Heart right ventricle (tissue), 16 donors: ENCODE measurements at regions of chr11 and their contacts with region 1.

Region 1: GRCh38 chr11:100930185-100930778 is 199.3 kb downstream of the PGR start:
- DNase-seq: peak in 1 of 2 donors; percentile 11
- ATAC-seq: peak in 4 of 8 donors; percentile 34 to 67 (median 62)
- H3K4me3 ChIP-seq: no peak overlapping the region
- H3K27ac ChIP-seq: no peak overlapping the region
- H3K4me1 ChIP-seq: peaks cover 0 to 17% (median 0%) of the 10 kb centered on the region in 9 donors
- H3K27me3 ChIP-seq: no peaks in the 10 kb centered on the region
- CTCF ChIP-seq: peak; percentile 42 to 76 (median 68)

Region 2: GRCh38 chr11:100581318-100581717 is 349.0 kb before region 1 on chr11:
- intact Hi-C with region 1: loop called (anchors 1 to 10 kb)
- DNase-seq: no peak
- ATAC-seq: no peak
- H3K4me3 ChIP-seq: no peak overlapping the region
- H3K27ac ChIP-seq: no peak overlapping the region
- H3K4me1 ChIP-seq: peaks cover 0 to 32% (median 13%) of the 10 kb centered on the region in 9 donors
- H3K27me3 ChIP-seq: no peaks in the 10 kb centered on the region
- CTCF ChIP-seq: no peak

Region 3: GRCh38 chr11:100855466-100856067 is 74.7 kb before region 1 on chr11:
- intact Hi-C with region 1: loop called in 4 of 10 experiments (anchors 5 kb)
- DNase-seq: no peak
- ATAC-seq: peak in 2 of 8 donors; percentile 50 to 54
- H3K4me3 ChIP-seq: no peak overlapping the region
- H3K27ac ChIP-seq: no peak overlapping the region
- H3K4me1 ChIP-seq: peaks cover 0 to 13% (median 0%) of the 10 kb centered on the region in 9 donors
- H3K27me3 ChIP-seq: no peaks in the 10 kb centered on the region
- CTCF ChIP-seq: peak; percentile 59 to 81 (median 71)

Region 4: DNA sequence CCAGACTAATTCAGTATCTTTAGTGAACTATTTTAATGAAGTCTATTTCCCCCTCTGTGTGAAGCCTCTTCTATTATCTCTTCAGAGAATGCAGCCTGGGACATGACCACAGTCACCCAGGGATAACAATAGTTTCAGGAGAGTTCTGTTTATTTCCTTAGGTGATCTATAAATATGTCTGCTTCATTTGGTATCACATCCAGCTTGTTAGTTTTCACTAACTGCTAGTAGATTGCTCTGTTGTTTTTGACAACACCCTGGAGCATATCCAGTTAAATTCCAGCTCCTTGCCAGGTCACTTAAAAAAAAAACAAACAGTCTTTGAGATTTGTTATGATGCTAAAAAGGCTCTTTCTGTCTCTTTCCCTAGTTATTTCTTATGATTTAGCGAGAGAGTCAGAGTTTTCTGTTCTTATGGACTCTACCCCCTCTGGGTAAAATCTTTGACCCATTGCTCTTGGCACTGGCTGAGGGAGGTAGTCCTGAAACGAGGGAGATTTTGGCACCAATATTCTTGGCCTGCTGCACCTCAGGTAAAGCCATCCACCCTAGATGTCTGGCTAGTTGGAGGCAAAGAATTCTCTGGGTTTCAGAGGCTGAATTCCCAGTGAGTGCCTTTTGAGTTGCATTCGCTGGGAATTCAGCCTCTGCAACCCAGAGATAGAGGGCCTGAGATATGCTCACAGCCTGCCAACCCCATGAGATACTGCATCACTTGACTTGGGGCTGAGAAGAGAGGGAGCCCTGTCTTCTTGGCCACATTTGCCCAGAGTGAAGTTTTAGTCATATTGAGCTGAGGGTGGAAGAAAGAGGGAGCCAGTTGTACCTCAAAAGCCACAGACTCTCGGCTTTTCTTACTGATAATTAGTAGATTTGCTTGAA is 40.2 kb after region 1 on chr11:
- intact Hi-C with region 1: no loop called
- DNase-seq: peak in 1 of 2 donors; percentile 4
- ATAC-seq: peak in 7 of 8 donors; percentile 12 to 89 (median 75)
- H3K4me3 ChIP-seq: no peak overlapping the region
- H3K27ac ChIP-seq: peak overlapping the region in 6 of 10 donors; percentile 22 to 68 (median 58)
- H3K4me1 ChIP-seq: peaks cover 0 to 16% (median 9%) of the 10 kb centered on the region in 9 donors
- H3K27me3 ChIP-seq: no peaks in the 10 kb centered on the region
- CTCF ChIP-seq: no peak

Region 5: GRCh38 chr11:101180481-101180880 is 250.2 kb after region 1 on chr11:
- intact Hi-C with region 1: no loop called
- DNase-seq: no peak
- ATAC-seq: no peak
- H3K4me3 ChIP-seq: no peak overlapping the region
- H3K27ac ChIP-seq: no peak overlapping the region
- H3K4me1 ChIP-seq: no peaks in the 10 kb centered on the region
- H3K27me3 ChIP-seq: no peaks in the 10 kb centered on the region
- CTCF ChIP-seq: no peak